Colonic mucosa (tissue), 4 donors: ENCODE measurements at regions of chr4 and their contacts with region 1.

Region 1: GRCh38 chr4:71732706-71733105 is 51.2 kb downstream of the GC start:
- DNase-seq: no peak
- H3K4me3 ChIP-seq: no peak overlapping the region
- H3K27ac ChIP-seq: no peak overlapping the region
- H3K4me1 ChIP-seq: no peaks in the 10 kb centered on the region
- H3K27me3 ChIP-seq: no peaks in the 10 kb centered on the region
- CTCF ChIP-seq: peak; percentile 37

Region 2: GRCh38 chr4:71932941-71933340 is 200.2 kb after region 1 on chr4:
- intact Hi-C with region 1: loop called (anchors 10 kb)
- DNase-seq: no peak
- H3K4me3 ChIP-seq: no peak overlapping the region
- H3K27ac ChIP-seq: no peak overlapping the region
- H3K4me1 ChIP-seq: no peaks in the 10 kb centered on the region
- H3K27me3 ChIP-seq: no peaks in the 10 kb centered on the region
- CTCF ChIP-seq: no peak

Region 3: GRCh38 chr4:72286185-72286584 is 553.5 kb after region 1 on chr4:
- intact Hi-C with region 1: loop called (anchors 10 kb)
- DNase-seq: no peak
- H3K4me3 ChIP-seq: no peak overlapping the region
- H3K27ac ChIP-seq: no peak overlapping the region
- H3K4me1 ChIP-seq: no peaks in the 10 kb centered on the region
- H3K27me3 ChIP-seq: no peaks in the 10 kb centered on the region
- CTCF ChIP-seq: no peak